PC-3 (cell line): ENCODE measurements at regions of chr1 and their contacts with region 1.

Region 1: GRCh38 chr1:70354332-70355110 is at the start of gene ANKRD13C:
- DNase-seq: peak; percentile 95
- ATAC-seq: peak; percentile 80
- H3K4me3 ChIP-seq: peak within 1 kb of the TSS; percentile 94
- H3K27ac ChIP-seq: peak within 1 kb of the TSS; percentile 92
- H3K4me1 ChIP-seq: peaks cover 53% of the 10 kb centered on the region
- H3K27me3 ChIP-seq: no peaks in the 10 kb centered on the region
- CTCF ChIP-seq: no peak
- total RNA-seq, gene ANKRD13C: 38.0 and 41.5 TPM in 2 replicates

Region 2: GRCh38 chr1:70319750-70320149 is 34.8 kb before region 1 on chr1:
- CTCF ChIA-PET with region 1: no interaction called
- POLR2A ChIA-PET with region 1: interaction called, 7 read pairs
- intact Hi-C with region 1: loop called (anchors 5 kb)
- DNase-seq: peak; percentile 82
- ATAC-seq: peak; percentile 96
- H3K4me3 ChIP-seq: no peak overlapping the region
- H3K27ac ChIP-seq: peak overlapping the region; percentile 43
- H3K4me1 ChIP-seq: peaks cover 22% of the 10 kb centered on the region
- H3K27me3 ChIP-seq: no peaks in the 10 kb centered on the region
- CTCF ChIP-seq: no peak

Region 3: DNA sequence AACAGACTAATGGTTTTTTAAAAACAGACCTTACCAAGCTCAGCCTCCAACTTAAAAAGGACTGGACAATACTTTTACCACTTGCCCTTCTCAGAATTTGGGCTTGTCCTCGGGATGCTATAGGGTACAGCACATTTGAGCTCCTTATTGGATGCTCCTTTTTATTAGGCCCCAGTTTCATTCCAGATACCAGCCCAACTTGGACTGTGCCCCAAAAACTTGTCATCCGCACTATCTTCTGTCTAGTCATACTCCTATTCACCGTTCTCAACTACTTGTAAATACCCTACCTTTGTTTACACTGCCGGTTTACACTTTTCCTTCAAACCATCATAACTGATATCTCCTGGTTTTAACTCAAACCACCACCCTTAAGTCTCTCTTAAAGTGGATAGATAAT is 17.9 kb after region 1 on chr1:
- CTCF ChIA-PET with region 1: no interaction called
- POLR2A ChIA-PET with region 1: interaction called, 4 read pairs
- intact Hi-C with region 1: loop called (anchors 2 kb)
- DNase-seq: peak; percentile 81
- ATAC-seq: peak; percentile 78
- H3K4me3 ChIP-seq: peak overlapping the region; percentile 27; the same call in 1 of the 2 replicates
- H3K27ac ChIP-seq: peak overlapping the region; percentile 99
- H3K4me1 ChIP-seq: peaks cover 50% of the 10 kb centered on the region
- H3K27me3 ChIP-seq: no peaks in the 10 kb centered on the region
- CTCF ChIP-seq: no peak

Region 4: GRCh38 chr1:70410604-70411359 is 56.3 kb after region 1 on chr1 and contains the start of gene CTH:
- CTCF ChIA-PET with region 1: no interaction called
- POLR2A ChIA-PET with region 1: interaction called, 22 read pairs
- intact Hi-C with region 1: loop called (anchors 1 kb)
- DNase-seq: peak; percentile 98
- ATAC-seq: peak; percentile 95
- H3K4me3 ChIP-seq: peak within 1 kb of the TSS; percentile 88
- H3K27ac ChIP-seq: peak within 1 kb of the TSS; percentile 73
- H3K4me1 ChIP-seq: peaks cover 11% of the 10 kb centered on the region; the same call in 1 of the 2 replicates
- H3K27me3 ChIP-seq: no peaks in the 10 kb centered on the region
- CTCF ChIP-seq: no peak
- total RNA-seq, gene CTH: 8.5 and 13.2 TPM in 2 replicates

Region 5: GRCh38 chr1:70509996-70510876 is 155.7 kb after region 1 on chr1:
- CTCF ChIA-PET with region 1: no interaction called
- POLR2A ChIA-PET with region 1: no interaction called
- intact Hi-C with region 1: loop called (anchors 5 kb)
- DNase-seq: peak; percentile 96
- ATAC-seq: peak; percentile 91
- H3K4me3 ChIP-seq: peak overlapping the region; percentile 45; the same call in 1 of the 2 replicates
- H3K27ac ChIP-seq: peak overlapping the region; percentile 38
- H3K4me1 ChIP-seq: peaks cover 6% of the 10 kb centered on the region
- H3K27me3 ChIP-seq: no peaks in the 10 kb centered on the region
- CTCF ChIP-seq: peak; percentile 83